Aorta (tissue), 5 donors: ENCODE measurements at regions of chr6 and their contacts with region 1.

Region 1: DNA sequence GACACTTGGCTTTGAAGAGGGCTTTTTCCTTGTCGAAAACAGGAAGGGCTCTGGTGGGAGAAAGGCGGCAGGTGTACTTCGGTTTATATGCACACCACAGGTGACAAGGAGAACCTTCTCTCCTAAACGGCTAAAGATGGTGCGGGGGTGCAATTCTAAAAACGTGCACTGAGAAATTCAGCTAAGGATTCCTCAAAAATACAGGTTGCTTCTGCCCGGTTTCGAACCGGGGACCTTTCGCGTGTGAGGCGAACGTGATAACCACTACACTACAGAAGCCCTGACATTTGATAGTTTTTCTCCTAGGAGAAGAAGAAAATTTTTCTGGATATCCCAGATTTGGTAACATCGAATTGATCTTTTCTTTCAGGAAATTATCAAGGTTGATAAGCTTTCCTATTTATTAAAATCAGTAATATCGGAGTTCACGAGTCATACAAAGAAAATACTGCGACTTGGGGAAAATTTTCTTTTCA is 32.0 kb downstream of the POM121L2 start:
- DNase-seq: no peak
- ATAC-seq: no peak
- H3K4me3 ChIP-seq: no peak overlapping the region
- H3K27ac ChIP-seq: no peak overlapping the region
- H3K4me1 ChIP-seq: no peaks in the 10 kb centered on the region
- H3K27me3 ChIP-seq: peaks cover 2 to 5% of the 10 kb centered on the region in 2 donors

Region 2: GRCh38 chr6:26613689-26614683 is 666.1 kb before region 1 on chr6:
- intact Hi-C with region 1: loop called in 1 of 2 experiments (anchors 5 kb)
- DNase-seq: peak; percentile 54 to 76
- ATAC-seq: peak; percentile 54
- H3K4me3 ChIP-seq: no peak overlapping the region
- H3K27ac ChIP-seq: no peak overlapping the region
- H3K4me1 ChIP-seq: no peaks in the 10 kb centered on the region
- H3K27me3 ChIP-seq: peaks cover 0 to 1% of the 10 kb centered on the region in 2 donors